Calu3 (cell line): ENCODE measurements at regions of chr6 and their contacts with region 1.

Region 1: GRCh38 chr6:20274137-20274536 is 61.9 kb upstream of the MBOAT1 start:
- DNase-seq: peak; percentile 46
- H3K4me3 Mint-ChIP-seq: peak overlapping the region; percentile 12
- H3K27ac Mint-ChIP-seq: peak overlapping the region; percentile 37
- H3K4me1 Mint-ChIP-seq: peaks cover 21% of the 10 kb centered on the region
- H3K27me3 Mint-ChIP-seq: no peaks in the 10 kb centered on the region
- CTCF ChIP-seq: no peak

Region 2: DNA sequence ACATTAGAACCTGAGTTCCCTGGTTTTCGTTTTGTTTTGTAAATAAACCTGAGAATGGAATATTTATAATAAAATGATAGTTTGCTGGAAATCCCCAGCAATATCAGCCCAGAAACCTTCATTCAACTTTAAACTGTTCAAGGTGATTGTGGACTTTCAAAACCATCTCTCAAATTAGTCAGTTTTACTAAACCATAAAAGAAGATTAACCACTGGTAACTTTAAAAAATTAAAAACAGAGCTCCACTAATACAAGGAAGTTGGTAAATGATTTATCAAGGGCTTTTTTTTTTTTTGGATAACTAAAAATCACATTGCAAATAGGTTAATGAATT is 71.8 kb before region 1 on chr6:
- CTCF ChIA-PET with region 1: no interaction called
- intact Hi-C with region 1: loop called (anchors 2 kb)
- DNase-seq: no peak
- H3K4me3 Mint-ChIP-seq: peak overlapping the region; percentile 69
- H3K27ac Mint-ChIP-seq: peak overlapping the region; percentile 95
- H3K4me1 Mint-ChIP-seq: peaks cover 66% of the 10 kb centered on the region
- H3K27me3 Mint-ChIP-seq: no peaks in the 10 kb centered on the region
- CTCF ChIP-seq: no peak

Region 3: GRCh38 chr6:20230401-20231119 is 43.6 kb before region 1 on chr6:
- CTCF ChIA-PET with region 1: interaction called, 10 read pairs
- intact Hi-C with region 1: loop called (anchors 1 kb)
- DNase-seq: no peak
- H3K4me3 Mint-ChIP-seq: no peak overlapping the region
- H3K27ac Mint-ChIP-seq: no peak overlapping the region
- H3K4me1 Mint-ChIP-seq: peaks cover 17% of the 10 kb centered on the region
- H3K27me3 Mint-ChIP-seq: no peaks in the 10 kb centered on the region
- CTCF ChIP-seq: no peak

Region 4: DNA sequence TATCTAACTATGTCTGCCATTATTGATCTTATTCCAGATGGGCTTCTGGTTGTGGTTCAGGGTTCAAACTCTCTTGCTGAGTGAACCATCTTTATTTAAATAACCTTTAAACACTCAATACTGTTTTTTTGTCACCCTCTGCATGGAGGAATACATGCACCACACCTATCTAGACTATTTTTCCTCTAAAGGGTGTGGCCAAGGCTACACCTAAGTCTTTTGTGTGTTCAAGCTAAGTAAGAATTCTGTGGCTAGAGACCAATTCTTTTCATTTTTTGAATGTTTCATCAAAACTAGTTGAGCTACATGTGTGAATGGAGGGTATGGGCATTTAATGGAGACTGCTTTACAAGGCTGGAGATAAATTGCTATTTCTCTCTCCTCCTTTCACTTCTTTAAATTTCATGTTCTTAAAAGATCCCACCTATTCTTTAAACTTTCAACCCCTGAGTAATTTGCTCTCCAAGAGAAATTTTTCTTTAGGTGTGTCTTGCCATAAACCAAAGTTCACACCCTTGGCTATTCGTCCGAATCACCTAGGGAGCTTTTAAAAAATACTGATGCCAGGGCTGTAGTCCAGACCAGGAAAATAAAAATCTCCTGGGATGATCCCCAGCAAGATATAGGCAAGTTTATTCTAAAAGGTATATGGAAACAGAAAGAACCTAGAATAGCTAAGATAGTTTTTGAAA is 37.1 kb before region 1 on chr6:
- CTCF ChIA-PET with region 1: interaction called, 10 read pairs
- intact Hi-C with region 1: loop called (anchors 2 kb)
- DNase-seq: peak; percentile 46
- H3K4me3 Mint-ChIP-seq: peak overlapping the region; percentile 13
- H3K27ac Mint-ChIP-seq: peak overlapping the region; percentile 87
- H3K4me1 Mint-ChIP-seq: peaks cover 38% of the 10 kb centered on the region
- H3K27me3 Mint-ChIP-seq: no peaks in the 10 kb centered on the region
- CTCF ChIP-seq: no peak